Dorsolateral prefrontal cortex (tissue), 120 donors: ENCODE measurements at regions of chr17 and their contacts with region 1.

Region 1: GRCh38 chr17:78917451-78918275 is 7.5 kb downstream of the TIMP2 start:
- DNase-seq: no peak
- H3K4me3 ChIP-seq: no peak overlapping the region
- H3K27ac ChIP-seq: peak overlapping the region in 36 of 59 donors; percentile 2 to 73 (median 42)
- H3K27me3 ChIP-seq: no peaks in the 10 kb centered on the region
- CTCF ChIP-seq: no peak

Region 2: DNA sequence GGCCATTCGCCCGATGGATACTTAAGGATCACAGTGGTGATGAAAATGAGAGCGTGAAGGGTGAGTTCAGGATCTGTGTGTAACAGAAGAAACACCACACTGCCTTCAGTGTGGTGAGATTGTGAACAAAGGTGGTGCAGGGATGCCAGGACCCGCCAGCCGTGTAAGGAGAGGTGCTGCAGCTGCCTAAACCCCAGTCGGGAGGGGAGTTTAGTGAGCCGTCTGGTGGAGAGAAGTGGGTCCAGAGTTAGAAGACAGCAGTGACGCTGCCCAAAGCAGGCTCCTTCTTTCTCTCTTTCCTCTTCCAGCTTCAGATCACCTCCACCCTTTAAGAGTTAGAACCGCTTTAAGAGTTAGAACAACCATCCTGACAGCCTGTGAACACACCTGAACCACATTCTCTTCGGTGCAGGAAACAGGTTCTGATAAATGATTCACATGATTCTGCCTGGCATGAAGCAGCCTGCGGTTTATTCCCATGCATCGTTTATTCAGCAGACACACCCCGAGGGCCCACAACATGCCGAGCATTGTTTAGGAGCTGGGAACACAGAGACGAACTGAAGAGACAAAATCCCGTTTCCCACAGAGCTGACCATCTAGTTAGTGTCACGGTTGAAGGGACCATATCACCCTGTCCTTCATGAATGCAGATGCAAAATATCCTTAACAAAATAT is 256.4 kb before region 1 on chr17:
- intact Hi-C with region 1: no loop called
- DNase-seq: peak in 3 of 10 donors; percentile 11 to 16 (median 14)
- H3K4me3 ChIP-seq: no peak overlapping the region
- H3K27ac ChIP-seq: no peak overlapping the region
- H3K27me3 ChIP-seq: no peaks in the 10 kb centered on the region
- CTCF ChIP-seq: no peak

Region 3: DNA sequence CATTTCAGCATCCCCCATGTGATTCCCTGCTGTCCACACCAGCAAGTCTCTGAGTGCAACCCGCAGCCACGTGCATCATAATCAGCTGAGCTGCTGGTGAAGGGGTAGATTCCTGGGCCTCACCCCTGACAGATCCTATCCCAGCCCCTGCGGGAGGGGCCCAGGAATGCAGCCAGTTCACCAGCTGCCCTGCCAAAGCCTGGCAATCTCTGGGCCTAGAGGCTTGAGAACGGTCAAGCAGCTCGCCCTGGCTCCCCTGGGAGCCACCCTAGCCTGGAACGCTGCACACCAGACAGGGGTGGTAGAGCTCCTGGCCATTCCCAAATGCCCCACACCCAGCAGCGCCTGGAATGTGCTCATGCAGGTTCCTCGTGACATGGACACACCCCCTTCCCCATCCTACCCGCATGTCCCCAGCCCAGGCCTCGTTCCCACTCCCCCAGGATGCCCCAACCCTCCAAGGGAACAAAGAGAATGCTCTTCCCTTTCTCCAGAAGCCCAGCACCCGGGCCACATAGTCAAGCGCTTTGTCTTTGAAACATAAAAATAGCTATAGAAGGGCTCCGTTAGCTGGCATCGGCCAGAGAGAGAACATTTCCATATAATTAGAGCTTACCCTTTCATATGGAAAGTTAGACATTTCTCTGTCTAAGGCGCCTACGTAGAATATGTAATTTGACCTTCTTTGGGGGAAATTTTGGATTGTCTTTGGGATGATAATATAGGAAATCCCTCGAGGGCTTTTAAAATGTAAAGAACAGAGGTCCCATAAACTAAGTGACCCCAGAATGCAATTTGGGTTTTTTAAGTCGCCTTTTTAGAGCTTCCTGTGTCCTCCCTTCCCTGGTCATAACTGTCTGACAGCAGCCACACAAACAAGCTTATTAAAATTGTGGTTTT is 18.1 kb before region 1 on chr17:
- intact Hi-C with region 1: loop called in 1 of 2 experiments (anchors 2 kb)
- DNase-seq: peak in 6 of 10 donors; percentile 36 to 74 (median 62)
- H3K4me3 ChIP-seq: peak overlapping the region in 2 of 59 donors; percentile 5 to 14
- H3K27ac ChIP-seq: peak overlapping the region; percentile 20 to 100 (median 88)
- H3K27me3 ChIP-seq: no peaks in the 10 kb centered on the region
- CTCF ChIP-seq: peak in 1 of 56 donors; percentile 16

Region 4: DNA sequence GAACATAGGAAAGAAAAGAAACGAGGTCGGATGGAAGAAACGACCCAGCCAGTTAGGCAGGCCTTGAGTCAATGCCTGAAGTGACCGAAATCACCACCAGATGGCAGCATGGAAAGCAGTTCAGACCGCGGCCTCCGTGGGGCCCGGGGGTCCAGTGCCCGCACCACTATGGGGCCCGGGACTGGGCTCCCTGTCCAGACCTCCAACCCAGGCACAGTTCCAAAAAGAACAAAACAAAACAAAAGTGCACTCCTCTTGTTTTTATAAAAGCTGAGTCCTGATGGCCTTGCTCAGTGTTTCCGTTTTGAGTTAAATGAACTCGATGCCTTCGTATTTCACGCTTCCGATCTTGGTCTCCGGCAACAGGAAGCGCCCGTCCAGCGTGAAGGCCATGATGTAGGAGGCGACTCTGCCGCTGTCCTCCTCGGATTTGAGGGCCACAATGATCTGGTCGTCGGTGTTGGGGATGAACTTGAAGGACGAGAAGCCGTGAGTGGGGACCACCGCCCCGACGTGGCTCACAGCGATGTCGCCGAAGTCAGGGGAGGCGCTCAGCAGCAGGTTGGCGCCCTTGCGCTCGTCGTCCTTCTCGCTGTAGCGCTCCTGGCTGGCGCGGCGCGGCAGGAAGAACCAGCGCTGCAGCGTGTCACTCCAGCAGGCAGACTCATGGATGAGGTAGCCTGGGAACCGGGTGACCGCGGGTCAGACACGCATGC is 75.7 kb after region 1 on chr17:
- intact Hi-C with region 1: no loop called
- DNase-seq: peak in 8 of 10 donors; percentile 42 to 70 (median 62)
- H3K4me3 ChIP-seq: no peak overlapping the region
- H3K27ac ChIP-seq: peak overlapping the region in 15 of 59 donors; percentile 6 to 68 (median 21)
- H3K27me3 ChIP-seq: no peaks in the 10 kb centered on the region
- CTCF ChIP-seq: peak; percentile 61 to 92 (median 82)

Region 5: GRCh38 chr17:79019632-79020584 is 102.2 kb after region 1 on chr17:
- intact Hi-C with region 1: no loop called
- DNase-seq: peak in 3 of 10 donors; percentile 55 to 75 (median 75)
- H3K4me3 ChIP-seq: peak overlapping the region in 1 of 59 donors; percentile 2
- H3K27ac ChIP-seq: peak overlapping the region in 5 of 59 donors; percentile 36 to 54 (median 42)
- H3K27me3 ChIP-seq: peaks cover 0 to 19% (median 9%) of the 10 kb centered on the region in 45 donors
- CTCF ChIP-seq: peak; percentile 40 to 75 (median 62)